ENCODE measurements at regions of chr4 and their contacts with region 1.

Region 1: DNA sequence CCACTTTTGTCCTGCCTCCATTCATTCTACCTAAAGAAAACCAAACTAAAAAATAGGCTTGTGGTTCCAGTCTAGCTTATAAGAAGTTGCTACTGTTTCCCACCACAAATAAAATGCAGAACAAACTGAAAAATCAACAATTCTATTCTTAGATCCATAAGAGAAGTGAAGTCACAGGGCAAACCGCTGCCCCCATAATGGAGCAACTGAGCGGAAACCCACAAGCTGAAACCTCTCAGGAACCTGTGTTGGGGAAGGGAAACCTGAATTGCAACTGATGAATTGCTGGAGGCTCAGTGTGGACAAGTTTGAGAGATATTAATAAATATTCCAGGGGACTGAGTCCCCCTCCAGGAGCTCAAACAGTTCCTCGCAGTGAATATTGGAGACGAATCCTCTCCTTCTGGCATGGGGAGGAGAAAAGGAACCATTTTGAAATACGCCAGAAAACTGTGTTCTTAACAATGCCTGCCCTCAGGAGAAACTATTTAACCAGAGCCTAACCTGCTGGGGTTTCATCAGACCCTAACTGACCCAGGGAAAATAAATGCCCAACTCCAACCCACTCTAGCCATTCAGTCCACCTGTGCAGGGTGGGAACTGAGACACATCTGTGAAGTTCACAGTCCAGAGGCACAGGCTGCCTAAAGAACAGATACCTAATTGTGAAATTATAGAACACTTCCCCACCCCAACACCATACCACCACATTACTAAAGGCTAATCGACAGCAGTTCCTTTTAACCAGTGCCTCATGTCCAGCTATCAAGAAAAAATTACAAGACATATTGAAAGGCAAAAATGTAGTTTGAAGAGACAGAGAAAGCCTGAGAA is 22.8 kb upstream of the SH3RF1 start:
- DNase-seq: peak; percentile 90
- ATAC-seq: peak; percentile 92
- H3K4me3 ChIP-seq: peak overlapping the region; percentile 26; the same call in 1 of the 2 replicates
- H3K27ac ChIP-seq: peak overlapping the region; percentile 85
- H3K4me1 ChIP-seq: peaks cover 33% of the 10 kb centered on the region
- H3K27me3 ChIP-seq: no peaks in the 10 kb centered on the region
- CTCF ChIP-seq: no peak
- EP300 ChIP-seq: peak; percentile 72 to 83; a peak in 2 of 4 replicates
- POLR2A ChIP-seq: no peak
- RAD21 ChIP-seq: peak; percentile 30; the same call in 1 of the 2 replicates

Region 2: DNA sequence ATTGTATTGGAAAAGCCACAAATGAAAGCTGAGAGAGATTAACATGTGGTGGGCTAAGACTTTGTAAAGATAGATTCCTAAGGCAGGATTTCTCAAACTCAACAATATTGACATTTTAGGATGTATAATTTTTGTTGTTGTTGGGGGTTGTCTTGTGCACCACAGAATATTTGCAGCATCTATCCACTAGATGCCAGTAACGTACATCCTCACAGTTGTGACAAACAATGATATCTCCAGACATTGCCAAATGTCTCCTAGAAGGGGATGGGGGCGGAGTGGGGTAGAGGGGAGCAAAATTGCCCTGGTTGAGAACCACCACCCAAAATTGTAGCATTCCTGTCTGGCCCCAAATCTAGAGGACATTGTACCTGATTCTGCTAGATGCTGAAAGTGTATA is 268.8 kb before region 1 on chr4:
- CTCF ChIA-PET with region 1: interaction called, 4 read pairs
- POLR2A ChIA-PET with region 1: no interaction called
- RAD21 ChIA-PET with region 1: no interaction called
- SMC1A ChIA-PET with region 1: interaction called, 10 read pairs
- in situ Hi-C with region 1: no loop called
- intact Hi-C with region 1: no loop called
- DNase-seq: no peak
- ATAC-seq: peak; percentile 97
- H3K4me3 ChIP-seq: no peak overlapping the region
- H3K27ac ChIP-seq: no peak overlapping the region
- H3K4me1 ChIP-seq: no peaks in the 10 kb centered on the region
- H3K27me3 ChIP-seq: no peaks in the 10 kb centered on the region
- CTCF ChIP-seq: peak; percentile 63 to 77 (median 65)
- EP300 ChIP-seq: no peak
- POLR2A ChIP-seq: no peak
- RAD21 ChIP-seq: peak; percentile 94

Region 3: GRCh38 chr4:169229571-169230028 is 64.0 kb before region 1 on chr4:
- CTCF ChIA-PET with region 1: no interaction called
- POLR2A ChIA-PET with region 1: no interaction called
- RAD21 ChIA-PET with region 1: no interaction called
- SMC1A ChIA-PET with region 1: no interaction called
- in situ Hi-C with region 1: no loop called
- intact Hi-C with region 1: no loop called
- DNase-seq: no peak
- ATAC-seq: no peak
- H3K4me3 ChIP-seq: no peak overlapping the region
- H3K27ac ChIP-seq: no peak overlapping the region
- H3K4me1 ChIP-seq: peaks cover 4% of the 10 kb centered on the region; the same call in 1 of the 2 replicates
- H3K27me3 ChIP-seq: no peaks in the 10 kb centered on the region
- CTCF ChIP-seq: no peak
- EP300 ChIP-seq: no peak
- POLR2A ChIP-seq: no peak
- RAD21 ChIP-seq: no peak

Region 4: GRCh38 chr4:169305651-169306050 is 12.1 kb after region 1 on chr4:
- CTCF ChIA-PET with region 1: interaction called, 6 read pairs
- POLR2A ChIA-PET with region 1: no interaction called
- RAD21 ChIA-PET with region 1: interaction called, 3 read pairs
- SMC1A ChIA-PET with region 1: interaction called, 11 read pairs
- in situ Hi-C with region 1: no loop called
- intact Hi-C with region 1: no loop called
- DNase-seq: no peak
- ATAC-seq: no peak
- H3K4me3 ChIP-seq: no peak overlapping the region
- H3K27ac ChIP-seq: no peak overlapping the region
- H3K4me1 ChIP-seq: peaks cover 3% of the 10 kb centered on the region; the same call in 1 of the 2 replicates
- H3K27me3 ChIP-seq: no peaks in the 10 kb centered on the region
- CTCF ChIP-seq: no peak
- EP300 ChIP-seq: no peak
- POLR2A ChIP-seq: no peak
- RAD21 ChIP-seq: no peak

Region 5: DNA sequence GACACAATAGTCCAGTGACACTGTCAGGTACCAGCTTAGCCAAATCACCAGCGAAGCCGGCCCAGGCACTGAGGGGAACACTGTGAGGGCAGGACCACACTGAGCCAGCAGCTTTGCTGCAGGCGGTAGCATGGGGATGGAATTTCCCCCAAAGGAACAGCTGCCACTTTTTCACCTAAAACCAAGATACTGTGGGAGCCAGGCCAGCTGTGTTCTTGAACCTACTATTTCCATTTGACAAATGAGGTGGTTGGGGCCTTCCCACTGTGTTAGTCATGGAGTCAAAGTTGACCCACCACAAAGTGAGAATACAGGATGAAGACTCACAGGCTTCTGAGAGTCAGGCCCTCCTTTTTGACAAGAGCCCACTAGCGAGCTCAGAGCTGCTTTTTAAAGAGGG is 47.9 kb after region 1 on chr4:
- CTCF ChIA-PET with region 1: no interaction called
- POLR2A ChIA-PET with region 1: no interaction called
- RAD21 ChIA-PET with region 1: interaction called, 5 read pairs
- SMC1A ChIA-PET with region 1: interaction called, 22 read pairs
- in situ Hi-C with region 1: no loop called
- intact Hi-C with region 1: no loop called
- DNase-seq: peak; percentile 62
- ATAC-seq: peak; percentile 87
- H3K4me3 ChIP-seq: no peak overlapping the region
- H3K27ac ChIP-seq: peak overlapping the region; percentile 23; the same call in 1 of the 2 replicates
- H3K4me1 ChIP-seq: peaks cover 13% of the 10 kb centered on the region
- H3K27me3 ChIP-seq: no peaks in the 10 kb centered on the region
- CTCF ChIP-seq: no peak
- EP300 ChIP-seq: peak in 1 of 2 experiments; percentile 36; a peak in 1 of 4 replicates
- POLR2A ChIP-seq: no peak
- RAD21 ChIP-seq: peak; percentile 35; the same call in 1 of the 2 replicates

Region 6: DNA sequence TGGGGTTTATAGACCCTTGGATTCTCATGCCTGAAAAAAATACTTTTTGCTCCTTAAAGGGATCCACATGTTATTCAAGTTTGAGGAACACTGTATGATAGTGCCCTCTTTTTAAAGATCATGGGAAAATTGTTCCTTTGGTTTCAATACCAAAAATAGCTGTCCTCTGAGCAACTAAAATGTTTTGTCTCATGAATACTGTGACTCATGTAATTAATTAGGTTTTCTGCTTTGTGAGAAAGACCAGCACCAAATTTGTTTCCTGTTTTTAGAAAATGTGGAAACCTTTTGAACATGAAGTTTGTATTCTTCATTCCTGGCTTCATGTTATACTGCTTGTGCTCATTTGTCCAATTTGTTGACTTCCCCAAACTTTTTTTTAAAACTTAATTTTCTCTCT is 104.8 kb after region 1 on chr4:
- CTCF ChIA-PET with region 1: interaction called, 3 read pairs
- POLR2A ChIA-PET with region 1: no interaction called
- RAD21 ChIA-PET with region 1: interaction called, 5 read pairs
- SMC1A ChIA-PET with region 1: interaction called, 11 read pairs
- in situ Hi-C with region 1: no loop called
- intact Hi-C with region 1: no loop called
- DNase-seq: no peak
- ATAC-seq: peak; percentile 5; the same call in 2 of the 3 replicates
- H3K4me3 ChIP-seq: no peak overlapping the region
- H3K27ac ChIP-seq: no peak overlapping the region
- H3K4me1 ChIP-seq: peaks cover 13% of the 10 kb centered on the region
- H3K27me3 ChIP-seq: no peaks in the 10 kb centered on the region
- CTCF ChIP-seq: no peak
- EP300 ChIP-seq: no peak
- POLR2A ChIP-seq: no peak
- RAD21 ChIP-seq: no peak

Region 7: DNA sequence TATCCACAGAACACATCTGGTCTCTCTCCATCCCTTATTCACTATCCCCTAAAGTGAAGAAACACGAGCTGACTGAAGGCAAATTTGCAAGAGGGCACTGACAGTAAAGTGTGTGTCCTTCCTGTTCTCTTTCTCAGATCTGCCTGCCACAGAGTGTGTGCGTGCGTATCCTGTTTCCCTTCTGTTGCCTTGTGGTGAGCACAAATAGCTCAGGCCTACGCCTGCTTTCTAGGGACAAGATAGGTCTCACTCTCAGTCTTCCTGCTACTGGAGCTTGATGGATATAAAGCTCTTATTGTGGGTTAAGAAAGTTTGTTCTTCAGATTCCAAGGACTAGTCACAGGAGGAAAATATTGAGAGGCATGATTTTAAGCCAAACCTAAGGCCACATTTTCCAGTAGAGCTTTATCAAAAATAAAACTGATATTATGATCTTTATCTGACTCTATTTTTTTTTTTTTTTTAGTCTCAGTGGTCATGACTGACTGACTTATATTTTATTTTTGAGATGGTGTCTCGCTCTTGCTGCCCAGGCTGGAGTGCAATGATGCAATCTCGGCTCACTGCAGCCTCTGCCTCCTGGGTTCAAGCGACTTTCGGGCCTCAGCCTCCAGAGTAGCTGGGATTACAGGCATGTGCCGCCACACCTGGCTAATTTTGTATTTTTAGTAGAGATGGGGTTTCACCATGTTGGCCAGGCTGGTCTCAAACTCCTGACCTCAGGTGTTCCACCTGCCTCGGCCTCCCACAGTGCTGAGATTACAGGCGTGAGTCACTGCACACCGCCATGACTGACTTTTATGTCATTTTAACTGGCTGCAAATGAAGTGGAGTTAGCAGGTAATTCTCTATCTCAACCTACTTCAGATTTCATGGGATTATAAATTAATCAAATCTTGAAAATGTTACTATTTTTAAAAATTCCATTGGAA is 117.5 kb after region 1 on chr4:
- CTCF ChIA-PET with region 1: interaction called, 4 read pairs
- POLR2A ChIA-PET with region 1: interaction called, 3 read pairs
- RAD21 ChIA-PET with region 1: interaction called, 5 read pairs
- SMC1A ChIA-PET with region 1: interaction called, 10 read pairs
- in situ Hi-C with region 1: no loop called
- intact Hi-C with region 1: loop called (anchors 1 kb)
- DNase-seq: peak; percentile 93
- ATAC-seq: peak; percentile 97
- H3K4me3 ChIP-seq: 0 out of 2 replicates have a peak overlapping the region, but pooled peaks have one; percentile 46
- H3K27ac ChIP-seq: peak overlapping the region; percentile 63
- H3K4me1 ChIP-seq: peaks cover 22% of the 10 kb centered on the region
- H3K27me3 ChIP-seq: no peaks in the 10 kb centered on the region
- CTCF ChIP-seq: no peak
- EP300 ChIP-seq: peak; percentile 87 to 92
- POLR2A ChIP-seq: peak; percentile 61
- RAD21 ChIP-seq: peak; percentile 32; the same call in 1 of the 2 replicates

Region 8: GRCh38 chr4:169492438-169493163 is 199.0 kb after region 1 on chr4:
- CTCF ChIA-PET with region 1: no interaction called
- POLR2A ChIA-PET with region 1: no interaction called
- RAD21 ChIA-PET with region 1: no interaction called
- SMC1A ChIA-PET with region 1: no interaction called
- in situ Hi-C with region 1: no loop called
- intact Hi-C with region 1: no loop called
- DNase-seq: peak; percentile 13
- ATAC-seq: peak; percentile 74
- H3K4me3 ChIP-seq: no peak overlapping the region
- H3K27ac ChIP-seq: no peak overlapping the region
- H3K4me1 ChIP-seq: no peaks in the 10 kb centered on the region
- H3K27me3 ChIP-seq: no peaks in the 10 kb centered on the region
- CTCF ChIP-seq: peak; percentile 57 to 68 (median 67)
- EP300 ChIP-seq: no peak
- POLR2A ChIP-seq: no peak
- RAD21 ChIP-seq: peak; percentile 71

Region 9: GRCh38 chr4:170476145-170476750 is 1182.7 kb after region 1 on chr4:
- CTCF ChIA-PET with region 1: no interaction called
- POLR2A ChIA-PET with region 1: no interaction called
- RAD21 ChIA-PET with region 1: no interaction called
- SMC1A ChIA-PET with region 1: no interaction called
- in situ Hi-C with region 1: no loop called
- intact Hi-C with region 1: no loop called
- DNase-seq: no peak
- ATAC-seq: no peak
- H3K4me3 ChIP-seq: no peak overlapping the region
- H3K27ac ChIP-seq: no peak overlapping the region
- H3K4me1 ChIP-seq: no peaks in the 10 kb centered on the region
- H3K27me3 ChIP-seq: no peaks in the 10 kb centered on the region
- CTCF ChIP-seq: no peak
- EP300 ChIP-seq: no peak
- POLR2A ChIP-seq: no peak
- RAD21 ChIP-seq: no peak